Activated B cell treated with CpG ODN at 0.5 μM for 24 hours (primary cell): ENCODE measurements at regions of chr1 and their contacts with region 1.

Region 1: DNA sequence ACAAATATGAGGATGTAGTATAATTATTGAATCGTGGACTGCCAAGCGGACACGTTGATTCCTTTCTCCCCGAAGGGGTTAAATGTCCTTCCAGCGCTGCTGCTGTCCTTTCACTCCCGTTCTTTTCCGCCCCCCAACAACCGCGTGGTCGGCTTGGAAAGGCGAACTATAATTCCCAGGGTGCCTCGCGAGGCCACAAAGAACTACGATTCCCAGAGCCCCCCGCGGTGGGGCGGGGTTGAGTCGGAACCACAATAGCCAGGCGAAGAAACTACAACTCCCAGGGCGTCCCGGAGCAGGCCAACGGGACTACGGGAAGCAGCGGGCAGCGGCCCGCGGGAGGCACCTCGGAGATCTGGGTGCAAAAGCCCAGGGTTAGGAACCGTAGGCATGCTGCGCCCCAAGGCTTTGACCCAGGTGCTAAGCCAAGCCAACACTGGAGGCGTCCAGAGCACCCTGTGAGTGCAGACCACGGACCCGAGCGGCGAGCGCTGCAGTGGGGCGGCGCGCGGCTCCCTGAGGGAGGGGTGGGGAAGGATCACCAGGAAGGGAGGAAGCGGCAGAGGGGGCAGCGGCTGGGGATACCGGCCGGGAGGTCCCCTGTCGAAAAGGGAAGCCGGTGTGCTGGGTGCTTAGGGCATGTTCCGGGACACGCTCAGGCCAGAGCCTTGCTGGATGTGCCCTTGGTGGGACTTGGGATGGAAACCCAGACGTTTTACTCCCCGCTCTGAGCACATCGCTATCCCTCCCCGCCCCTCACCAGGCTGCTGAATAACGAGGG is at the start of gene LAMTOR2:
- DNase-seq: peak; percentile 94
- ATAC-seq: peak; percentile 73
- H3K4me3 Mint-ChIP-seq: peak within 1 kb of the TSS; percentile 93
- H3K27ac Mint-ChIP-seq: peak within 1 kb of the TSS; percentile 97
- H3K4me1 Mint-ChIP-seq: peaks cover 29% of the 10 kb centered on the region
- H3K27me3 Mint-ChIP-seq: no peaks in the 10 kb centered on the region
- CTCF ChIP-seq: no peak
- total RNA-seq, gene LAMTOR2: 45.9 and 48.0 TPM in 2 replicates

Region 2: DNA sequence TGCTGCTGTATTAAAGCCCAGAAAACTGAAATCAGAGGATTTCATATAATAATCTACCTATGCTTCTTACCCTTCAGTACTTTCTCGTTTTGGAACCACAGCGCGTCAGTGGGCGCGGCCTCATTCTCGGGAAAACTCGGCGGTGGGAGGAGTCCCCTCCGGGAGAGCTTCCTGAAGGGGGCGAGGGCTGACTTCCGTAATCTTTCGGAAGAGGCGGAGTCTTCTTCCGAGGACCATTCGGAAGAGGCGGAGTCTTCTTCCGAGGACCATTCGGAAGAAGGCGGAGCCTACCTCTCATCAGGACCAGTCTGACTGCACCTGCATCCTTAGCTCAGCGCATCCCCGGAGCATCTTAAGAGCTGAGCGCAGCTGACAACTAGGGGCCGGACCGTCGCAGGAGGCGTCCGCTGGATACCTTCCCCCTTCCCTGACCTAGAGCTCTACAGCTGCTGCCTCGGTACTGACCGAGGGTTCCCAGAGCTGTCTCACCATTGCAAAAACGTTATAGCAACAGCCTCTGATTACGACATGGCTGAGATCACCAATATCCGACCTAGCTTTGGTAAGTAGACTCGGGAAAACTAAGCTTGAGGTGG is 195.4 kb before region 1 on chr1 and contains the start of gene SYT11:
- CTCF ChIA-PET with region 1: no interaction called
- POLR2A ChIA-PET with region 1: no interaction called
- intact Hi-C with region 1: loop called (anchors 1 kb)
- DNase-seq: peak; percentile 82
- ATAC-seq: peak; percentile 91
- H3K4me3 Mint-ChIP-seq: peak within 1 kb of the TSS; percentile 98
- H3K27ac Mint-ChIP-seq: peak within 1 kb of the TSS; percentile 97
- H3K4me1 Mint-ChIP-seq: peaks cover 49% of the 10 kb centered on the region
- H3K27me3 Mint-ChIP-seq: peaks cover 2% of the 10 kb centered on the region
- CTCF ChIP-seq: no peak
- total RNA-seq, gene SYT11: 3.3 and 3.7 TPM in 2 replicates

Region 3: DNA sequence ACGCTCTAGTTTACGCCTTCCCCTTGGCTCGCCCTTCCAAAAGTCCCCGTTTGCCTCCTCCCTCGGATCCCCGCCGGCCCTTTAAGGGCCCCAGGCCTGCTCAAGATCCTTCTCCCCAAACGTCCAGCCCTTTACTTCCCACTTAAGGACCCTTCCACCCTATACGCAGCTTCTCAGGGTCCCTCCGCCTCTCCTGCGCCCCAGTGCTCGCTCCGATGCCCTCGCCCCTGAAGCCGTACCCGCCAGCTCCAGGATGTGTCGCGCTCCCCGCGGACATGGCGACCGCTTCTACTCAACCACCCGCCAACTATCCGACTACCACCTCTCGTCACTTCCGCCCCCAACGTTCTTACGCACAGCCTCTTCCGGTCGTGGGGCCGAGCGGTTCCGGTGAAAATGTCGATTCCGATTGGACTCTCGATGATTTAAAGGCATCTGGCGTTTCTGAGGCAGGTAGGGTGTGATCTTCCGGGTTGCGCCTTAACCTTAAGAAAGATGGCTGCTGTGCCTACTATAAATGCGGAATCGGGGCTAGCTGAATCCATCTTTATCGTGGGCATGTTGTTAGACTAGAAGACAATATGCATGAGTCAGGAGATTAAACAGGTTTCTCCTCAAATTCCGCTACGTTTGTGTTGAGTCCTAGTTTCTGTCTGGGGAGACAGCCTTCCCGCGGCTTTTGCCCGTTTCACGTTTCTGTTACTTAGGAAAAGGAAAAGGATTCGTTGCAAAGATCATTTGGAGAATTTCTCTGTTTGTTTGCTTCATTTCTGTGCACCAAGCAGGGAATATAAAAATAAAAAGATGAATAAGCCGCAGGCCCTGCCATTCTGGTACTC is 120.4 kb before region 1 on chr1 and contains the start of gene KHDC4:
- CTCF ChIA-PET with region 1: no interaction called
- POLR2A ChIA-PET with region 1: interaction called, 7 read pairs
- intact Hi-C with region 1: loop called (anchors 1 kb)
- DNase-seq: peak; percentile 85
- ATAC-seq: peak; percentile 93
- H3K4me3 Mint-ChIP-seq: no peak within 1 kb of the TSS
- H3K27ac Mint-ChIP-seq: no peak within 1 kb of the TSS
- H3K4me1 Mint-ChIP-seq: peaks cover 41% of the 10 kb centered on the region
- H3K27me3 Mint-ChIP-seq: no peaks in the 10 kb centered on the region
- CTCF ChIP-seq: no peak
- total RNA-seq, gene KHDC4: 88.3 and 105 TPM in 2 replicates

Region 4: GRCh38 chr1:156012051-156012817 is 42.5 kb before region 1 on chr1:
- CTCF ChIA-PET with region 1: no interaction called
- POLR2A ChIA-PET with region 1: interaction called, 4 read pairs
- intact Hi-C with region 1: loop called (anchors 2 kb)
- DNase-seq: no peak
- ATAC-seq: peak; percentile 90
- H3K4me3 Mint-ChIP-seq: peak overlapping the region; percentile 28
- H3K27ac Mint-ChIP-seq: peak overlapping the region; percentile 74
- H3K4me1 Mint-ChIP-seq: peaks cover 23% of the 10 kb centered on the region
- H3K27me3 Mint-ChIP-seq: no peaks in the 10 kb centered on the region
- CTCF ChIP-seq: no peak

Region 5: DNA sequence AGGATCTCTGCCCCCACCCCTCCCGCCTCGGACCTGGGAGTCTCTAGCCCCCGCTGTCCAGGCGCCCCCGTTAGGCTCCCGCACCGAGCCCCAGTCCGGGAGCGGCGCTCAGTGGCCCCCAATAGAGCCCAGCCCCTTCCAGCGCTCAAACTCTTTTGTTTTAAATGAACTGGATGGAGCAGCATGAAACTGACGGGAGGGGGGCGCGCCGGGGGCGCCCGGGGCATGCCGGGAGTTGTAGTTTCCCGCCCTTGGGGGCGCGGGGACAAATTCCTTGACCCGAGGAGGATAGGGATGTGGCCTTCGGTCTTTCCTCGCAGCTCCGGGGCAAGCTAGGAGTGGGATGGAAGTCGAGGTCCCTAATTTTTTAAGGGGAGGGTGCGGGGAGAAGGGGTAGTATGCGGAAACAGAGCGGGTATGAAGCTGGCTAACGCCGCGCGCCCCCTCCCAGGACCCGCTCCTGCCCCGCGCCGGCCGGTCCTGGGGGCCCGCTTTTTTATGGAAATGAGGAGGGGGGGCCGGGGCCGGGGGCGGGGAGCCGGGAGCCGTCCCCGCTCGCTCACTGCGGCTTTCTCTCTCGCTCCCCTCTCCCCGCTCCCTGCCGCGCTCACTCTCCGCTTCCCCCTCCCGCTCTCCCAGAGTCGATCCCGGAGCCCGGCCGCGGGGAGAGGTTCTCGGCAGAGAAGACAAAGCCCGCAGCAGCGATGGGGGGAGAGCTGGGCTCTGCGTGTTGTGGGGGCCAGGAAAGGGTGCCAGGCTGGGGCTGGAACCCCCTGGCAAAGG is 27.8 kb after region 1 on chr1 and contains the start of gene MEX3A:
- CTCF ChIA-PET with region 1: no interaction called
- POLR2A ChIA-PET with region 1: no interaction called
- intact Hi-C with region 1: loop called (anchors 1 kb)
- DNase-seq: peak; percentile 66
- ATAC-seq: peak; percentile 88
- H3K4me3 Mint-ChIP-seq: peak within 1 kb of the TSS; percentile 89
- H3K27ac Mint-ChIP-seq: no peak within 1 kb of the TSS
- H3K4me1 Mint-ChIP-seq: peaks cover 16% of the 10 kb centered on the region
- H3K27me3 Mint-ChIP-seq: peaks cover 14% of the 10 kb centered on the region
- CTCF ChIP-seq: no peak
- total RNA-seq, gene MEX3A: 0.39 and 0.47 TPM in 2 replicates

Region 6: DNA sequence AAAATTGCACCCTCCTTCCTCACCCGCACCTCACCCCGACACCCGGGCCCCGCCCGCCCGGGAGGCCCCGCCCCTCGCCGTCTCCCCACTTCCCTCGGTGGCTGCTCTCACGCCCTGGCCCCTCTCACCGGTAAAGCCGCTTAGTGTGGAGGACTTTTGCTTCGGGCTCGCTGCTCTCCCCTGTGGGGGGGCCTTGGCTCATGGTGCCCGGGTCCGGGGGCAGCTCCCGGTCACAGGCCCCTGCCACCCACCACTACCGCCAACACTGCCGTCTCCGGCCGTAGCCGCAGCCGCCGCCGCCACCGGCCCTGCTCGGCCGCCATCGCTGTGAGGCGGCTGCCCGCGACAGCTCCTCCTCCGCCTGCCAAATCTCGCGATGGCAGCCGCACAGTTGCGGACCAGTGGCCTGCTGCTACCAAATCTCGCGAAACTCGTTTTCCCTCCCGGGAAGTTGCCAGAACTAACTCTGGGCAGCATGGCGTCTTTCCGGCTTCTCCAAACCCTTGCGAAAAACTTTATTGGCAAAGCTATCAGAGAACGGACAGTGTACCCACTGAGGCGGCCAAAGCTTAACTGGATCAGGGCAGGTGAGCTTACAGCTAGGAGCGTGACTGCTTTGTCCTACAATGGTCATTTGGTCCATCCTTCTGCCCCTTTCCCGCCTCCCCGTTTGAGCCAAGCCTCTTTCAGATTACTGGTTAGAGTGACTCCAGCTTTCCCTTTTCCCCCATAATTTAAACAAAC is 228.0 kb after region 1 on chr1 and contains the start of gene SMG5:
- CTCF ChIA-PET with region 1: no interaction called
- POLR2A ChIA-PET with region 1: no interaction called
- intact Hi-C with region 1: loop called (anchors 1 kb)
- DNase-seq: peak; percentile 89
- ATAC-seq: peak; percentile 91
- H3K4me3 Mint-ChIP-seq: peak within 1 kb of the TSS; percentile 93
- H3K27ac Mint-ChIP-seq: peak within 1 kb of the TSS; percentile 88
- H3K4me1 Mint-ChIP-seq: peaks cover 40% of the 10 kb centered on the region
- H3K27me3 Mint-ChIP-seq: no peaks in the 10 kb centered on the region
- CTCF ChIP-seq: no peak
- total RNA-seq, gene SMG5: 62.6 and 77.1 TPM in 2 replicates

Region 7: GRCh38 chr1:156740679-156741612 is 686.3 kb after region 1 on chr1 and contains the start of gene MRPL24:
- CTCF ChIA-PET with region 1: no interaction called
- POLR2A ChIA-PET with region 1: no interaction called
- intact Hi-C with region 1: loop called (anchors 1 kb)
- DNase-seq: peak; percentile 87
- ATAC-seq: peak; percentile 89
- H3K4me3 Mint-ChIP-seq: peak within 1 kb of the TSS; percentile 98
- H3K27ac Mint-ChIP-seq: peak within 1 kb of the TSS; percentile 97
- H3K4me1 Mint-ChIP-seq: peaks cover 33% of the 10 kb centered on the region
- H3K27me3 Mint-ChIP-seq: no peaks in the 10 kb centered on the region
- CTCF ChIP-seq: no peak
- total RNA-seq, gene MRPL24: 65.8 and 83.7 TPM in 2 replicates

Region 8: DNA sequence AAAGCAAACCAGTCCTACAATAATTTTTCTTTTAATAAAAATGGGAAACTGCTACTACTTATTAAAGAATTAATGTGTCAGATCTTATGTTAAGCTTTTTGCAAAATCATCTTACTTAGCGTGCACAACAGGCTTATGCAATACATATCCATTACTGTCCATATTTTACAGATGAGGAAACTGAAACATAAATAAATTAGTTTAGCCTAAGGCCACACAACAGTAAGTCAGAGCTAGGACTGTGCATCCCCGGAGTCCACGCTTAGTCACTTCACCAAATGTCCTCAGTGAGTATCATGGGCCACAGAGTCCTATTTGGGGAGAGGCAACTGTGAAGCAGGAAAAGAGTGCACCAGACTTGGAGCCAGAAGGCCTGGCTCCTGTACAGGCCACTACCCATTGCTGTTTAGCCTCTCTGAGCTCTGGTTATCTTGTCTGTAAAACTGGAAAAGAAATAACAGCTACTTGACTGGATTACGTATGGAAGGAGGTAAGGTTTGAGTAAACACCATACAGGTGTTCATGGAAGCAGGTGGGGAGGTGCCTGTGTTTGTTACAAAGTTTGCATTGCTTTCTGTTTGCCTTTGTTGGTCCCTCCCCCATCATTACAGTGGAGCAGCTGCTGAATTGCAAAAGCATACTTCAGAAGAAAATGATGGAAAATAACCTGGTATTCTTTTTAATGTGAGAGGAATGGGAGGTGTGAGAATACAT is 1304.8 kb after region 1 on chr1:
- CTCF ChIA-PET with region 1: no interaction called
- POLR2A ChIA-PET with region 1: no interaction called
- intact Hi-C with region 1: no loop called
- DNase-seq: no peak
- ATAC-seq: no peak
- H3K4me3 Mint-ChIP-seq: no peak overlapping the region
- H3K27ac Mint-ChIP-seq: no peak overlapping the region
- H3K4me1 Mint-ChIP-seq: no peaks in the 10 kb centered on the region
- H3K27me3 Mint-ChIP-seq: no peaks in the 10 kb centered on the region
- CTCF ChIP-seq: no peak